GM12878 (cell line): ENCODE measurements at regions of chr18 and their contacts with region 1.

Region 1: DNA sequence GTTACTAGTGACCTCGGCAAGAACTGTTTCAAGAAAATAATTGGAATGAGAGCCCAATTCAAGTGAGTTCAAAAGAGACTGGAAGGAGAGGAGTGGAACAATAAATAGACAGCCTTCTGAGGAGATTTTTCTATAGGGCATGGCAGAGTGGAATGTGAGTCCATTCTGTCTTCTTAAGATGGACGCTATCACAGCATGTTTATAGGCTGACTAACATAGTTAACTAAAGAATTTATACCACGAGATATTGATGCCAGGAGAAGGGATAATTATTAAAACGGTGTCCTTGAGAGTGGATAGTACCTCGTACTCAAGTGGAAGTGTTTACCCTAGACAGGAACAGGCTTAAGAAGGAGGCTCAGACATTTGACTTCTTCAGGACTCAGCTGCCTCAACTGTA is 143.5 kb upstream of the RBBP8 start:
- DNase-seq: no peak
- ATAC-seq: no peak
- H3K4me3 ChIP-seq: no peak overlapping the region
- H3K27ac ChIP-seq: no peak overlapping the region
- H3K4me1 ChIP-seq: no peaks in the 10 kb centered on the region
- H3K27me3 ChIP-seq: no peaks in the 10 kb centered on the region; a peak in 1 of 4 replicates
- CTCF ChIP-seq: no peak
- EP300 ChIP-seq: no peak
- POLR2A ChIP-seq: no peak
- RAD21 ChIP-seq: no peak

Region 2: DNA sequence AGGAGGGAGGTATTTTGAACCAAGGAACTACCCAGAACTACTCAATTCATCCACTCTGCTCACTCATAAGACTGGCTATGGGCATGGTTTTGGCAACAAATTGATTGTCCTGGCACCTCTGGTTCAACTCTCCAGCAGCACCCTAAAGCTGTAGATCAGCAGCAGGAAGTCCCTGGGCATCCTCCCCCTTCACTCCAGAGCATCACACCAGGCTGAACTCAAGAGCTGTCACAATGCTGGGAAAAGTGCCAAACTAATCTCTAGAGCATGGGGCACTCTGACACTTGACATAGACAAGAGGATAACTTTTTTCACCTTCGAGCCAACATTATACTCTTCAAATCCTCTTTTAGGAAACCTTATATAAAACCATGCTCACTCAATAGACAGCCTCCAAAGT is 10.6 kb before region 1 on chr18:
- CTCF ChIA-PET with region 1: interaction called, 9 read pairs
- POLR2A ChIA-PET with region 1: interaction called, 4 read pairs
- RAD21 ChIA-PET with region 1: interaction called, 4 read pairs
- SMC1A ChIA-PET with region 1: interaction called, 12 read pairs
- in situ Hi-C with region 1: no loop called
- intact Hi-C with region 1: no loop called
- DNase-seq: no peak
- ATAC-seq: no peak
- H3K4me3 ChIP-seq: no peak overlapping the region
- H3K27ac ChIP-seq: no peak overlapping the region
- H3K4me1 ChIP-seq: no peaks in the 10 kb centered on the region
- H3K27me3 ChIP-seq: no peaks in the 10 kb centered on the region; a peak in 1 of 4 replicates
- CTCF ChIP-seq: no peak
- EP300 ChIP-seq: no peak
- POLR2A ChIP-seq: no peak
- RAD21 ChIP-seq: no peak

Region 3: GRCh38 chr18:23099621-23100020 is 310.0 kb after region 1 on chr18:
- CTCF ChIA-PET with region 1: no interaction called
- POLR2A ChIA-PET with region 1: no interaction called
- RAD21 ChIA-PET with region 1: no interaction called
- SMC1A ChIA-PET with region 1: no interaction called
- in situ Hi-C with region 1: no loop called
- intact Hi-C with region 1: loop called (anchors 10 kb)
- DNase-seq: no peak
- ATAC-seq: no peak
- H3K4me3 ChIP-seq: no peak overlapping the region
- H3K27ac ChIP-seq: no peak overlapping the region
- H3K4me1 ChIP-seq: no peaks in the 10 kb centered on the region
- H3K27me3 ChIP-seq: no peaks in the 10 kb centered on the region
- CTCF ChIP-seq: no peak
- EP300 ChIP-seq: no peak
- POLR2A ChIP-seq: no peak
- RAD21 ChIP-seq: no peak